ENCODE measurements at regions of chrX and their contacts with region 1.

Region 1: GRCh38 chrX:154840856-154841255 is 6.4 kb upstream of the SMIM9 start:
- DNase-seq: peak; percentile 9
- H3K4me3 Mint-ChIP-seq: no peak overlapping the region
- H3K27ac Mint-ChIP-seq: no peak overlapping the region
- H3K4me1 Mint-ChIP-seq: no peaks in the 10 kb centered on the region
- H3K27me3 Mint-ChIP-seq: no peaks in the 10 kb centered on the region

Region 2: GRCh38 chrX:153900831-153901752 is 939.8 kb before region 1 on chrX:
- CTCF ChIA-PET with region 1: no interaction called
- POLR2A ChIA-PET with region 1: no interaction called
- intact Hi-C with region 1: no loop called
- DNase-seq: peak; percentile 77
- H3K4me3 Mint-ChIP-seq: peak overlapping the region; percentile 49
- H3K27ac Mint-ChIP-seq: peak overlapping the region; percentile 56
- H3K4me1 Mint-ChIP-seq: peaks cover 35% of the 10 kb centered on the region
- H3K27me3 Mint-ChIP-seq: no peaks in the 10 kb centered on the region

Region 3: DNA sequence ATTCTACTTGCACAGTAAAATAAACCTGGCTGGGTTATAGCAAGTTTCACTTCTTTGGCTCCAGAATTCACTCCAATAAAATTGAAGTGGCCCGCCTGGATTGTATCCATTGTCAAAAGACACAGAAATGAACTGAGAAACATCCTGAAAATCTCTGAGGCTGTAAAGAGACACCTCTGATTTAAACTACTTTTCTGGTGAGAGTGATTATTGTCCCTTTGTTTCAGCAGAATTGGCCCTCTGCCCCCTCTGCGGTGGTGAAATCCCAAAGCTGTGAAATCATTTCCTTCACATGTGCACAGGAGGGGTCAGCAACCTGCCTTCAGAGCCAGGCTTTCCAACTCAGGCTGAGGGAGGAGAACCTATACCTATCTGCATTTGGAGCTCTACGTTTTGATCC is 113.0 kb before region 1 on chrX:
- CTCF ChIA-PET with region 1: no interaction called
- POLR2A ChIA-PET with region 1: no interaction called
- intact Hi-C with region 1: no loop called
- DNase-seq: no peak
- H3K4me3 Mint-ChIP-seq: no peak overlapping the region
- H3K27ac Mint-ChIP-seq: no peak overlapping the region
- H3K4me1 Mint-ChIP-seq: peaks cover 85% of the 10 kb centered on the region
- H3K27me3 Mint-ChIP-seq: no peaks in the 10 kb centered on the region

Region 4: GRCh38 chrX:154775419-154776349 is 65.2 kb before region 1 on chrX:
- CTCF ChIA-PET with region 1: interaction called, 5 read pairs
- POLR2A ChIA-PET with region 1: no interaction called
- intact Hi-C with region 1: loop called (anchors 2 kb)
- DNase-seq: peak; percentile 62
- H3K4me3 Mint-ChIP-seq: no peak overlapping the region
- H3K27ac Mint-ChIP-seq: peak overlapping the region; percentile 78
- H3K4me1 Mint-ChIP-seq: peaks cover 37% of the 10 kb centered on the region
- H3K27me3 Mint-ChIP-seq: no peaks in the 10 kb centered on the region